Common myeloid progenitor, CD34-positive (primary cell): ENCODE measurements at regions of chr3 and their contacts with region 1.

Region 1: GRCh38 chr3:129633751-129634392 is 27.4 kb upstream of the PLXND1 start:
- DNase-seq: no peak
- H3K4me3 ChIP-seq: no peak overlapping the region
- H3K27ac ChIP-seq: no peak overlapping the region
- H3K4me1 ChIP-seq: no peaks in the 10 kb centered on the region
- H3K27me3 ChIP-seq: no peaks in the 10 kb centered on the region

Region 2: GRCh38 chr3:129592381-129593131 is 41.3 kb before region 1 on chr3:
- CTCF ChIA-PET with region 1: no interaction called
- POLR2A ChIA-PET with region 1: no interaction called
- DNase-seq: peak in 2 of 3 donors; percentile 46 to 52
- H3K4me3 ChIP-seq: peak overlapping the region in 4 of 7 experiments; percentile 32 to 54 (median 49)
- H3K27ac ChIP-seq: peak overlapping the region in 1 of 2 experiments; percentile 58
- H3K4me1 ChIP-seq: peaks cover 4 to 89% (median 73%) of the 10 kb centered on the region in 4 experiments
- H3K27me3 ChIP-seq: no peaks in the 10 kb centered on the region

Region 3: DNA sequence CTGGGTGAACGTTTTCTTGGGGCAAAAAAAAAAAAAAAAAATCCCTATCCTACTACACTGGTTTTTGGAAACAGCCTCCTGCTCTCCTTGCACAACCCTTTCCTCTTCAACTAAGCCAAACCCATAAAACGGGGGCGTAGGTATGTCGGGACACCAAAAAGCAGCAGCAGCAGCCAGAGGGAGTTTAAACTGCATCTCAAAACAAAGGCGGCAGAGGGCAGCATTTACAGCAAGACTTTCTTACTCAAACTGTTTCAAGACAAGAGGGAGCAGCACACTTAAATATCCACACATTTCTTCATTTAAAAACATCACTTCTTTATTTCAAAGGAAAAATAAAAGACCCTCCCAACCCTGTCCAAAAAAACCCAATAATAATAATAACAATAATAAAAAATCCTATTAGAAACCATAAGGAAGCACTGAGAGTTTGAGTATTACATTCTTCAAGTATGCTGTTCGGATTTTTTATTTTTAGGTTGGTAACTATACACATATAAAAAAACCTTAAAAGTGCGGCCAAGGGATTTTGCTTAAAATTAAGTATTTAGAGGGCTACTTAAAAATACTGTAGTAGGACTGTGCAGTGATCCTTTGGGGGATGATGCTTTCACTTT is 16.5 kb after region 1 on chr3:
- CTCF ChIA-PET with region 1: interaction called, 10 read pairs
- POLR2A ChIA-PET with region 1: no interaction called
- DNase-seq: peak; percentile 73 to 85 (median 80)
- H3K4me3 ChIP-seq: no peak overlapping the region
- H3K27ac ChIP-seq: no peak overlapping the region
- H3K4me1 ChIP-seq: peaks cover 0 to 3% (median under 1%) of the 10 kb centered on the region in 4 experiments
- H3K27me3 ChIP-seq: no peaks in the 10 kb centered on the region